MCF 10A (cell line): ENCODE measurements at regions of chr2 and their contacts with region 1.

Region 1: GRCh38 chr2:3461801-3462492 is 57.4 kb downstream of the ADI1 start:
- DNase-seq: peak; percentile 73
- H3K4me3 Mint-ChIP-seq: no peak overlapping the region
- H3K27ac Mint-ChIP-seq: no peak overlapping the region
- H3K4me1 Mint-ChIP-seq: peaks cover 14% of the 10 kb centered on the region
- H3K27me3 Mint-ChIP-seq: no peaks in the 10 kb centered on the region
- CTCF ChIP-seq: peak; percentile 74

Region 2: DNA sequence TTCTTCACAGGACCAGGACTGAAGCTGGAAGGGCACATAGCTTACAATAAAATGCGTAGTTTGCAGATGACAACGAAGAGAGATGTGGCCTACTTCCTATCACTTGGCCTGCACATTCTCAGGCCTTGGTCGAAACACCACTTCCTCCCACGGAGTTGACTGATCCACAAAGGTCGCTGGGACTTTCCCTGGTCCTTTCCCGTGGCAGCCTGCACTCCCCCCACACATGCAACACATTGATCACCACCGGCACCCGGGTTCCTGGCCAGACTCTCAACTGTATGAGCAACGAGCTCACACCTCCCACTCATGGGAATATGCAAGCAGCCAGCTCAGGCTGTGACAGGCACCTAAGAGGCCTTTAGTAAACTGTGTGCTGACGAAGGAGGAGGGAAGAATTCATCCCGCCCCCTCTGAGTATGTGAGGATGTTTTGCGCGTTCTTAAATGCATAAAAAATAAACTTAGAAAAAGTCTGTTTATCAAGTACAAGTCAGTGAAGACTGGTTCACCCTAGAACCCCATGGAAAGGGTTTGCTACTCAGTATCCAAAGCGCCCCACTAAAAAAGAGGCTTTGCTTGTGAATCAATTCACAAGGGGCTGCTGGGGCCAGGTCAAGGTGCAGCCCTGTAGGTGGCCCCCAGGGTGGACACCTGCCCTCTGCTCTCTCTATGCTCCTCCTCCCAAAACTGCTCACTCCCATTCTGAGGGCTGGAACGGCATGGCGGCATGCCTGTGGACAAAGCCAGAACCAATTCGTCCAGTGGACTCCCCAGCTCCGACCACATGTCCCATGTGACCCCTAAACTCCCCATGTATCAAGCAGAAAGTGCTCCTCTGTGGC is 238.6 kb before region 1 on chr2:
- CTCF ChIA-PET with region 1: no interaction called
- POLR2A ChIA-PET with region 1: no interaction called
- intact Hi-C with region 1: no loop called
- DNase-seq: no peak
- H3K4me3 Mint-ChIP-seq: no peak overlapping the region
- H3K27ac Mint-ChIP-seq: no peak overlapping the region
- H3K4me1 Mint-ChIP-seq: no peaks in the 10 kb centered on the region
- H3K27me3 Mint-ChIP-seq: no peaks in the 10 kb centered on the region
- CTCF ChIP-seq: no peak

Region 3: DNA sequence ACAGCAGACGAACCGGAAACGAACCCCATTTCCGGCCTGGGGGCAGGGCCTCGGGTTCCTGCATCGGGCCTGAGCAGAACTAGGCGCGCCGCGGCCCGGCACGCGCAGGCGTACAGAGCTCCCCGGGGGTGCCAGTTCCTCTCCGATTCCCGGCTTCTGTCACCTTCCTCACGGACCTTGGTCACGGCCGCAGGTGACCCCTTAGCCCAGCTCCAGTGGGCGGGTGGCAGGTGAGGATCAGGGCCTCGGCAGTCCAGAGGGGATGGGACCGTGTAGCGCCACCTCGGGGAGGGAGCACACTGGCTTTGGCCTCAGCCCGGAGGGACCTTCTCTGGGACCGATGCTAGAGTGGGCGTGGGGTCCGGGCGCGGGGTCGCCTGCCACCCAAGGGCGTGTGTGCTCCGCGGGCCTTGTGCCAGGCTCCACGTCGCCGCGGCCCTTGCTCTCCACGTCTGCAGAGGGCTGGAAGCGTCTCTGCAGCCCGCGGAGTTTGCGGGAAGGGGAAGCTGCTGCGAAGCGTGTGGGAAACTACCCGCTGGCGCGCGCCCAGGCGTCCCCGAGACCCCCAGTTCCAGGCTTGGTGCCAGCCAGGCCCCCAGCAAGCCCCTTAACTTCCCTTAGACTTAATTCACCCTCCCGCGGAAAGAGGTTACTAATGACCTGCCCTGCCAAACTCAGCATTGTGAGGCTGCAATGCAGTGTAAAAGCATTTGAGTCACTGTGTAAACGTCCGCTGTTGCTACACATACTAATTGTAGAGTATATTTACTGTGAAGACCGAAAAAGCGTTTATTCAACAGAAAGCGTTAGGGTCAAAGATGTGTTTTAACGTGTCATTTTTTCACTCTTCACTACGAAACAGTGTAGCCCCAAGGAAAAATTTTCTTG is 82.1 kb before region 1 on chr2 and contains the start of gene TRAPPC12:
- CTCF ChIA-PET with region 1: interaction called, 10 read pairs
- POLR2A ChIA-PET with region 1: interaction called, 5 read pairs
- intact Hi-C with region 1: no loop called
- DNase-seq: peak; percentile 93
- H3K4me3 Mint-ChIP-seq: peak within 1 kb of the TSS; percentile 99
- H3K27ac Mint-ChIP-seq: peak within 1 kb of the TSS; percentile 90
- H3K4me1 Mint-ChIP-seq: peaks cover 5% of the 10 kb centered on the region
- H3K27me3 Mint-ChIP-seq: no peaks in the 10 kb centered on the region
- CTCF ChIP-seq: peak; percentile 35
- total RNA-seq, gene TRAPPC12: 84.4 and 102 TPM in 2 replicates

Region 4: GRCh38 chr2:3403587-3404334 is 58.2 kb before region 1 on chr2:
- CTCF ChIA-PET with region 1: no interaction called
- POLR2A ChIA-PET with region 1: no interaction called
- intact Hi-C with region 1: no loop called
- DNase-seq: no peak
- H3K4me3 Mint-ChIP-seq: no peak overlapping the region
- H3K27ac Mint-ChIP-seq: no peak overlapping the region
- H3K4me1 Mint-ChIP-seq: no peaks in the 10 kb centered on the region
- H3K27me3 Mint-ChIP-seq: no peaks in the 10 kb centered on the region
- CTCF ChIP-seq: no peak

Region 5: DNA sequence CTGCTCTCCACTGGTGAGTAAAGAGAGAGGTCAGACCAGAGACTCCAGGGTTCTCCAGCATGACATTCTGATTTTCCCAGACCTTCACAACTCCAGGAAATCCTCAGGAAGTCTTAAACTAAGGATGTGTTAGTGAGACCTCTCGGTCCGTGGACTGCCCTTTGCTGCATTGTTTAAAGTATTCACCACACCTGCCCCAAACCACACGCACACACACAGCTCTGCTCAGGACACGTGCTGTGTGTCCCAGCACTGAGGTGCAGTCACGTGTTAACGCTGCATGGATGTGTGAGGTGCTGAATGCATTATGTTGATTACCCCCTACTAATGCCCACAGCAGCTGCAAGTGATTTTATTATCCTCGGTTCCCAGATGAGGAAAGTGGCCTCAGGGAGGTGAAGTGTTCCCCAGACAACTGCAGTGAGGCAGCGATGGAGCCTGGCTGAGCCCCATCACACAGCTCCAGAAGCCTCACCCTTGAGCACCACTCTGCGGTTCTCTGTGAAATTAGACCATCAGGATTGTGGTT is 14.1 kb before region 1 on chr2:
- CTCF ChIA-PET with region 1: interaction called, 24 read pairs
- POLR2A ChIA-PET with region 1: interaction called, 5 read pairs
- intact Hi-C with region 1: no loop called
- DNase-seq: no peak
- H3K4me3 Mint-ChIP-seq: no peak overlapping the region
- H3K27ac Mint-ChIP-seq: no peak overlapping the region
- H3K4me1 Mint-ChIP-seq: no peaks in the 10 kb centered on the region
- H3K27me3 Mint-ChIP-seq: no peaks in the 10 kb centered on the region
- CTCF ChIP-seq: no peak